Calu3 (cell line): ENCODE measurements at regions of chr16 and their contacts with region 1.

Region 1: DNA sequence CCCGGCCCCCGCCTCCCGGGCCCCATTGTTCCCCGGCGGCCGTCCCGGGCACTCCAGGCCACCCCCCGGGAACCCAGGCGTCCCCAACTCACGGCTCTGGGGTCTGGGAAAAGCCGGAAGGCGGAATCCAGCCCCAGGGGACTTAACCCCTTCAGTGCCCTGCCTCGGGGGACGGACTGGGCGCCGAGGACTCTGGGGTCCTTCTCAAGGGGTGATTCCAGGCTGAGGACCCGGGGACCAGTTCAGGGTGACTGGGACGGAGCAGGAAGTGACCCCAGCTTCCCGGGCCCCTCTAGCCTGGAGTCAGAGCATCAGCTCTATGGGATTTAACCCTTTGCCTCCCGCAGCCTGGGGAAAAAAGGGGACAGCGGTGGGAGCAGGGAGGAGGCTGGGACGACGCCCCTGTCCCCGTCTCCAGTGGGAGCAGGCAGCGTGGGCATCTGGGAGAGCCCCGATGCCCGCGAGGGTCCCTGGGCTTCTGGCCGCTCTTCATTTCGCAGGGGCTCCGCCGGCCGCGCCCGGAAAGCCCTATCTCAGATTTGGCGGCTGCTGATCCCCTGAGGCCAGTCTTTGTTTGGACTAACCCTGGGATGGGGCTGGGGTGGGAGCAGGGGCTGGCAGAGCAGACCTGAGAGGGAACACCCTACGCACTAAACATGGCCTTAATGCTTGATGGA is at the start of gene ZNF629:
- DNase-seq: peak; percentile 78
- H3K4me3 Mint-ChIP-seq: peak within 1 kb of the TSS; percentile 88
- H3K27ac Mint-ChIP-seq: peak within 1 kb of the TSS; percentile 87
- H3K4me1 Mint-ChIP-seq: peaks cover 23% of the 10 kb centered on the region
- H3K27me3 Mint-ChIP-seq: no peaks in the 10 kb centered on the region
- CTCF ChIP-seq: no peak
- total RNA-seq, gene ZNF629: 29.9 and 32.6 TPM in 2 replicates

Region 2: GRCh38 chr16:30805370-30806169 is 18.5 kb after region 1 on chr16:
- CTCF ChIA-PET with region 1: interaction called, 14 read pairs
- intact Hi-C with region 1: loop called (anchors 2 kb)
- DNase-seq: peak; percentile 89
- H3K4me3 Mint-ChIP-seq: peak overlapping the region; percentile 78
- H3K27ac Mint-ChIP-seq: peak overlapping the region; percentile 83
- H3K4me1 Mint-ChIP-seq: peaks cover 8% of the 10 kb centered on the region
- H3K27me3 Mint-ChIP-seq: no peaks in the 10 kb centered on the region
- CTCF ChIP-seq: no peak

Region 3: DNA sequence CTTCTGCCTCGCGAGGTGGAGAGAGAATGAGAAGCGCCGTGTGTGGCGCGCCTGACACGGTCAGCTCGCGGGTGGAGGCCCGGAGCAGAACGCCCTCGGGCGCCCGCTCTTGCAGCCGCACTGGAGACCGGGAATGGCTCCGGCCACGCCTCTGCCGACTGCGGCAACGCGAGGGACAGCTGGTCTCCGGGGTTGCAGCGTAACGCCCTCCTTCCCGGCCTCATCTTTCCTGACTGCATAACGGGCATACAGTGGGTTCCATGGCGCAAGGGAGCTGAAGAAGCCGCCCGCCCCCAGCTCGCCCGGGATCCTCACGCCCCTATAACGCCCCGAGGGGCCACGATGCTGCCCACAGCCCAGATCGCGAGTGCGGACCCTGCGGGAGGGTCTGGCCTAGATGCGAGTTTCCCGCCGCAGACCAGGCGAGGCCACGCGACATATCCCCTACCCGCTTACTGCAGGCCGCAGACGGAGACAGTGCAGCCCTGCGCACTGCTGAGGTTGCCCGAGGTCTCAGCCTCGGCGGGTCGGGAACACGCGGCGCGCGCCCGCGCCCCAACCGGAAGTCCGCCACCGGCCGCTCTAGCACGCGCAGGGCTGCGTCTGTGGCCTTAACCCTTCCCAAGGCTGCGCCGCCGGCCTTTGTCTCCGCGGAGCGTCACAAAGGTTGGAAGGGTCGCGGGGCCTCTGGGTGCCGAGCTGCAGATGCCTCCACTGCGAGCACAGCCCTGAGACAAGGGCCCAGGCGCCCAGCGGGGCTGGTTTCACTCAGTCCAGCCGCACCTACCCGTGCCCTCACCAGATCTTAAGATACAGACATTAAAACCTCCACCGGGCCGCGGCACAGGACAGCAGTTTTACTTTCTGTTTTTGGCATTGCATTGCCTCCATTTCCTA is 88.0 kb after region 1 on chr16:
- CTCF ChIA-PET with region 1: no interaction called
- intact Hi-C with region 1: loop called (anchors 5 kb)
- DNase-seq: peak; percentile 94
- H3K4me3 Mint-ChIP-seq: peak overlapping the region; percentile 97
- H3K27ac Mint-ChIP-seq: peak overlapping the region; percentile 80
- H3K4me1 Mint-ChIP-seq: peaks cover 16% of the 10 kb centered on the region
- H3K27me3 Mint-ChIP-seq: no peaks in the 10 kb centered on the region
- CTCF ChIP-seq: no peak